ENCODE measurements at regions of chrX and their contacts with region 1.

Region 1: DNA sequence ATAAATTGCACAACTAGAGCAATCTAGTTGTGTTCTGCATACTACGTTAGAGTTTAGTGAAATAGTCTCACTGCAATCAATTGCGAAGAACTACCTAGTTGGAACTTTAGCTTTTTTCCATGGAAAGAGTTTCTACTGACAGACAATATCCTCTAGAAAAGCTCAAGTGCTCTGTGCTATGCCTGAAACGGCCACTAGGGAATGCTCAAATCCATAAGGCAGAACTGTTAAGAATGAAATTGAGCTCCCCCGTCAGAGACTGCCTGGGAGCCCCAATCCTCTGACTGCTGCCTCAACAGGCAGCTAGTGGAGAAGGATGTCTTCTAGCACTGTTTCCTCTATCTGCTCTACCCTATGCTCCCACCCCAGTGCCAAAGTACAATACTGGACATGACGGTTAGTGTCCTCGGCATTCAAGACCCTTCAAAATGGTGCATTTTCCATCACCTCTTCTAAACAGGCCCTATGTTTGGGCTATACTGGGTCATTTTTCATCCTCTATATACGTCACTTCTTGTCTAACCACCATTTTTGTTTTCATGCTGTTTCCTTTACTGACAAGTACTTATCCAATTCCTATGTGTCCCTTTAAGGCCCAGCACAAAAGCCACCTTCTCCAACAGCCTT is 35.3 kb downstream of the FRMD7 start:
- DNase-seq: peak; percentile 73
- ATAC-seq: peak; percentile 65
- H3K4me3 ChIP-seq: no peak overlapping the region
- H3K27ac ChIP-seq: no peak overlapping the region
- H3K4me1 ChIP-seq: peaks cover 2% of the 10 kb centered on the region
- H3K27me3 ChIP-seq: no peaks in the 10 kb centered on the region
- CTCF ChIP-seq: peak; percentile 72

Region 2: GRCh38 chrX:132206259-132206658 is 113.7 kb after region 1 on chrX:
- CTCF ChIA-PET with region 1: interaction called, 11 read pairs
- POLR2A ChIA-PET with region 1: no interaction called
- intact Hi-C with region 1: no loop called
- DNase-seq: no peak
- ATAC-seq: no peak
- H3K4me3 ChIP-seq: no peak overlapping the region
- H3K27ac ChIP-seq: no peak overlapping the region
- H3K4me1 ChIP-seq: no peaks in the 10 kb centered on the region
- H3K27me3 ChIP-seq: no peaks in the 10 kb centered on the region
- CTCF ChIP-seq: no peak

Region 3: DNA sequence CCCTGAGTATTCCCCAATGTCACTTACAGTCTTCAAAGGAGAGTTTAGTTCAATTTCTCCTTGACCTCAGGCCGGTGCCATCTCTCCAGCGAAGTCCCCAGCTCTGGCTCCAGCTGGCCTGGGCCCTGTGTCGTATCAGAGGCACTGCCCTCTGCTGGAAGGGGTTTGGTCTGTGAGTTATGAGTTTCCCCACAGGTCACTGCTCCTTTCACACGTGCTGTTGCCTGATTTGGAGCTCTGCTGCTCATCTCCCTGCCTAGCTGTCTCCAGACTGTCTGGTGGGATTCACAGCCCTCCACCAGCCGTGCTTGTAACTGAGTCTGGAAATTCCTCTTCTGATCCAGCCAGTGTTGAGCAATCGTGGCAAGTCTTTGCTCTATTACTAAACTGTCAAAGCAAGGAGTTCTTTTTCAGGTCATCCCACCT is 126.8 kb after region 1 on chrX and contains the start of gene RAP2C:
- CTCF ChIA-PET with region 1: interaction called, 44 read pairs
- POLR2A ChIA-PET with region 1: no interaction called
- intact Hi-C with region 1: loop called (anchors 1 kb)
- DNase-seq: peak; percentile 78
- ATAC-seq: peak; percentile 56
- H3K4me3 ChIP-seq: peak within 1 kb of the TSS; percentile 92
- H3K27ac ChIP-seq: peak within 1 kb of the TSS; percentile 72
- H3K4me1 ChIP-seq: 0 out of 2 replicates have a peak, but pooled peaks cover 19% of the 10 kb centered on the region
- H3K27me3 ChIP-seq: no peaks in the 10 kb centered on the region
- CTCF ChIP-seq: peak; percentile 72
- total RNA-seq, gene RAP2C: 13.0 and 13.8 TPM in 2 replicates

Measured in PC-3 (cell line).